ENCODE measurements at regions of chr3 and their contacts with region 1.

Region 1: GRCh38 chr3:128787256-128788240 is 61.6 kb downstream of the RAB7A start:
- DNase-seq: peak in 5 of 9 experiments; percentile 34 to 70 (median 62)
- ATAC-seq: peak; percentile 60
- H3K4me3 ChIP-seq: peak overlapping the region in 1 of 2 experiments; percentile 36
- H3K4me3 Mint-ChIP-seq: peak overlapping the region; percentile 70
- H3K27ac ChIP-seq: peak overlapping the region; percentile 49 to 83
- H3K27ac Mint-ChIP-seq: peak overlapping the region; percentile 91
- H3K4me1 ChIP-seq: peaks cover 77% of the 10 kb centered on the region
- H3K4me1 Mint-ChIP-seq: peaks cover 88% of the 10 kb centered on the region
- H3K27me3 ChIP-seq: no peaks in the 10 kb centered on the region
- H3K27me3 Mint-ChIP-seq: no peaks in the 10 kb centered on the region
- CTCF ChIP-seq: peak; percentile 51

Region 2: DNA sequence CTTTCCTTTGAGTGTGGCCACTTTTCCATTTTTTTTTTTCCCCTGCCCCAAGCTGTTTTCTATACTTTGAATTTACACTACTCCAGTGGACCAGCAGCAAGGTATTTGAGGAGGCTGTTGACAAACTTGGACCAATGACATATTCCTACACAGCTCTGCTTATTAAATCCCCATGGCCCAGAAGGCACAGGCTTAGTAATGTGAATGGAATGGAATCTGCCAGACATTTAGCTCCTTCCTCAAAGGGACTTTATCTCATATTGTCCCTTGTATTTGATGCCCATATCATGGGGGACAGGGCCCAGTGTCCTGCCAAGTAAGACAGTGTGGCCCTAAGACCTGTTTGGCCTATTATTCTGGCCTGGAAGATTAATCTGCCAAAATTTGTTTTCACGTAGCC is 1976.0 kb before region 1 on chr3:
- CTCF ChIA-PET with region 1: no interaction called
- POLR2A ChIA-PET with region 1: no interaction called
- intact Hi-C with region 1: no loop called
- DNase-seq: no peak
- ATAC-seq: no peak
- H3K4me3 ChIP-seq: no peak overlapping the region
- H3K4me3 Mint-ChIP-seq: no peak overlapping the region
- H3K27ac ChIP-seq: no peak overlapping the region
- H3K27ac Mint-ChIP-seq: no peak overlapping the region
- H3K4me1 ChIP-seq: no peaks in the 10 kb centered on the region
- H3K4me1 Mint-ChIP-seq: no peaks in the 10 kb centered on the region
- H3K27me3 ChIP-seq: no peaks in the 10 kb centered on the region
- H3K27me3 Mint-ChIP-seq: no peaks in the 10 kb centered on the region
- CTCF ChIP-seq: no peak

Region 3: GRCh38 chr3:128804017-128804810 is 16.7 kb after region 1 on chr3:
- CTCF ChIA-PET with region 1: interaction called, 8 read pairs
- POLR2A ChIA-PET with region 1: interaction called, 9 read pairs
- intact Hi-C with region 1: loop called in 1 of 2 experiments (anchors 2 kb)
- DNase-seq: peak in 8 of 9 experiments; percentile 26 to 92 (median 56)
- ATAC-seq: peak; percentile 95
- H3K4me3 ChIP-seq: peak overlapping the region; percentile 21 to 36
- H3K4me3 Mint-ChIP-seq: peak overlapping the region; percentile 75
- H3K27ac ChIP-seq: peak overlapping the region; percentile 66 to 84
- H3K27ac Mint-ChIP-seq: peak overlapping the region; percentile 97
- H3K4me1 ChIP-seq: peaks cover 49% of the 10 kb centered on the region
- H3K4me1 Mint-ChIP-seq: peaks cover 69% of the 10 kb centered on the region
- H3K27me3 ChIP-seq: no peaks in the 10 kb centered on the region
- H3K27me3 Mint-ChIP-seq: no peaks in the 10 kb centered on the region
- CTCF ChIP-seq: no peak

Measured in CD8-positive, alpha-beta T cell (primary cell).